A673 (cell line): ENCODE measurements at regions of chr3 and their contacts with region 1.

Region 1: DNA sequence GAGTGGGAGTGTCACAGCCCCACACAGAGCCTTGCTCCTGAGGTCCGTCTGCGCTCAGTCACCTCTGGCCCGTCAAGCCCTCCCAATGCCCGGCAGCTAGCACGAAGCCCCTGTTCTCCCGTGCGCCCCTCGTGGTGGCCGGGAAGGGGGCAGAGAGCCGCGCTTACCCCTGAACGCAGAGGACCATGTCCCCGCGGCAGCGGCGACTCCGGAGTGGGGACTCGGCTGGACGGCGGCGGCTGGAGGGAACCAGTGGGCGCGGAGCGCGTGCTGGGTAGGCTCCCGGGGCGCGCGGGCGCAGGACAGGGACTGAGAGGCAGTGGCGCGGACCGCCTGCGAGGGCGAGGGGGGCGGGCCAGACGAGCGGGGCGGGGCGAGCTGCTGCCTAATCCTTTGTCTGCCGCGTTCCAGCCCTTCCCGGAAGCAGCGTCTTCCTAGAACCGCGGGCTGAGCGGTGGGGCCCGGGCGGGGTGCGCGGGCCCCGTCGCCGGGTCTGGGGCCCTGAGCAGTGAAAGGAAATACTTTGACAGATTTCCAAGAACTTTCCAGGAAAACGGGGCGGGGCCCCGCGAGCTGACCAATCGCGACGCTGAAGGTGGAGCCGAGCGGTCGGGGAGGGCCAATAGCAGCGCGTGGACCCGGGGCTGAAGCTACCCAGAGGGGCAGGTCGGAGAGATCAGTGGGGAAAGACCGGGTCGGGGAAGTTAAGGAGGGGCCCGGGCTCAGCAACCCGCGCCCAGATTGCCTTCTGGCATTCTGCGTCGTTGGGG is at the start of gene CISH:
- DNase-seq: peak; percentile 89
- H3K4me3 ChIP-seq: peak within 1 kb of the TSS; percentile 52
- H3K27ac ChIP-seq: peak within 1 kb of the TSS; percentile 67
- H3K4me1 ChIP-seq: peaks cover 8% of the 10 kb centered on the region
- H3K27me3 ChIP-seq: no peaks in the 10 kb centered on the region
- CTCF ChIP-seq: peak; percentile 44
- total RNA-seq, gene CISH: 0.86 and 1.6 TPM in 2 replicates

Region 2: DNA sequence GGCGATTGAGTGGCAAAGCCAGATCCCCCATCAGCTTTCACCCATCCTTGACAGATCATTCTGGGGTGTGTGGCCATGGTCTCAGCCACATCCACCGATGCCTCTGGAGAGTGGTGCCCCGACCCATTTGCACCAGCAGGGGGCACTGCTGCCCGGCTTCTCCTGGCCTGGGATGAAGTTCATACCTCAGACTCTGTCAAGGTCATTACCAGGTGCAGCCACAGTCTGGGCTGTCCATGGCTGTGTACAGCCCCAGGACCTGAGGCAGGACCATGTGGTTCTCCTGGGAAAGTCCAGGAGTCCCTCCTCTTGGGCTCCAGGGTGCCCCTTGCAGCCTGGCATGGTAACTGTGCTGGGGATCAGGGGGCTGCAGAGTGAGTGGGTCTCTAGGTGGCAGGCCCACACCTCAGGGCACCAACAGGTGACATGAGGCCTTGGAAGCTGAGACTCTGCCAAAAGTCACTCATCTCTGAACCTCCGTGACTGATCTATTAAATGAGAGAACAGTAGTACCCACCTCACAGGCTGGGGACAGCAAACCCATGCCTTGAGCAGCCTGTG is 175.5 kb before region 1 on chr3:
- CTCF ChIA-PET with region 1: no interaction called
- POLR2A ChIA-PET with region 1: no interaction called
- intact Hi-C with region 1: loop called (anchors 5 kb)
- DNase-seq: peak; percentile 23
- H3K4me3 ChIP-seq: no peak overlapping the region
- H3K27ac ChIP-seq: no peak overlapping the region
- H3K4me1 ChIP-seq: no peaks in the 10 kb centered on the region
- H3K27me3 ChIP-seq: no peaks in the 10 kb centered on the region
- CTCF ChIP-seq: peak; percentile 69

Region 3: GRCh38 chr3:50568947-50569749 is 42.5 kb before region 1 on chr3 and contains the start of gene HEMK1:
- CTCF ChIA-PET with region 1: interaction called, 3 read pairs
- POLR2A ChIA-PET with region 1: no interaction called
- intact Hi-C with region 1: loop called (anchors 5 kb)
- DNase-seq: peak; percentile 92
- H3K4me3 ChIP-seq: peak within 1 kb of the TSS; percentile 62
- H3K27ac ChIP-seq: peak within 1 kb of the TSS; percentile 76
- H3K4me1 ChIP-seq: no peaks in the 10 kb centered on the region
- H3K27me3 ChIP-seq: no peaks in the 10 kb centered on the region
- CTCF ChIP-seq: no peak
- total RNA-seq, gene HEMK1: 5.7 and 7.9 TPM in 2 replicates

Region 4: GRCh38 chr3:50850639-50851511 is 239.2 kb after region 1 on chr3:
- CTCF ChIA-PET with region 1: no interaction called
- POLR2A ChIA-PET with region 1: no interaction called
- intact Hi-C with region 1: no loop called
- DNase-seq: no peak
- H3K4me3 ChIP-seq: no peak overlapping the region
- H3K27ac ChIP-seq: no peak overlapping the region
- H3K4me1 ChIP-seq: no peaks in the 10 kb centered on the region
- H3K27me3 ChIP-seq: no peaks in the 10 kb centered on the region
- CTCF ChIP-seq: no peak

Region 5: DNA sequence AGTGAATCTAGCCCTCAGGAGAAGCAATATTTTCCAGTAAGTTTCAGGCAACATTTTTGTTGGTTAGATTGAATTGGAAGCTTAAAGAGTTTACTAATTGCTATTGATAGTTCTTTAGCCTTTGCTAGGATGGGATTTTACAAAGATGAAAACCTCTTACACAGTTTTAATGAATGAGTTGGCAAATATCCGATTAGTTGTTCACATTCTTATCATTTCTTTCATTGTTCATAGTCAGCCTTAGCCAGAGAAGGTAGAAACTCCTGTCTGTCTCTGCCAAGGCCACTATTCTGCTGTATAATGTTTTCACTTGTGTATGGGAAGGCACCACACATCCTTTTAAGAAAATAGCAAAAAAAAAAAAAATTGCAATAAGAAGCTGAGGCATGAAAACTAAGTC is 551.4 kb after region 1 on chr3:
- CTCF ChIA-PET with region 1: no interaction called
- POLR2A ChIA-PET with region 1: no interaction called
- intact Hi-C with region 1: no loop called
- DNase-seq: no peak
- H3K4me3 ChIP-seq: no peak overlapping the region
- H3K27ac ChIP-seq: no peak overlapping the region
- H3K4me1 ChIP-seq: no peaks in the 10 kb centered on the region
- H3K27me3 ChIP-seq: no peaks in the 10 kb centered on the region
- CTCF ChIP-seq: no peak

Region 6: DNA sequence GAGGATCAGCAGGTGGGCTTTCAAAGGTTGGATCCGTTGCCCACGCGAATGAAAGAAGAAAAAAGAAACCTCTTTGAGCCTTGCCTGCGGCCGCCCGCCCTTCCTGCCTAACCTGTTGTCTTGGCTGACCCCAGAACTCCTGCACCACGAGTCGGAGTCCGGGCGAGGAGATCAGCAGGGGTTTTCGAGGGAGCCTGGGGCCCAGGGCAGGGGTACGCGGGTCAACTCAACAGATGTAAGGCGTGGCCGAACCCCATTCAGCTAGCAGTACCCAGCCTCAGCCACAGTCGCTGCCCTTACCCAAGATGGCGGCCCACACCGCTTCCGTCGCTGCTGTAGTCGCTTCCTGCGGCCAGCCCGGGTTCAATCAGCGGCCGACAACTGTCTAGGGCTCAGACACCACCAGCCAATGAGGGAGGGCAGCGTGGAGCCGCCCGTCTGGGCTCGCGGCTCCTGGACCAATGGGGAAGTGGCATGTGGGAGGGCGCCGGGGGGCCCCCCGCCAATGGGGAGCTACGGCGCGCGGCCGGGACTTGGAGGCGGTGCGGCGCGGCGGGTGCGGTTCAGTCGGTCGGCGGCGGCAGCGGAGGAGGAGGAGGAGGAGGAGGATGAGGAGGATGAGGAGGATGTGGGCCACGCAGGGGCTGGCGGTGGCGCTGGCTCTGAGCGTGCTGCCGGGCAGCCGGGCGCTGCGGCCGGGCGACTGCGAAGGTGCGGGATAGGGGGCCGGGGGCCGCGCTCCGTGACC is 773.3 kb after region 1 on chr3 and contains the start of gene MANF:
- CTCF ChIA-PET with region 1: interaction called, 5 read pairs
- POLR2A ChIA-PET with region 1: no interaction called
- intact Hi-C with region 1: loop called (anchors 5 kb)
- DNase-seq: peak; percentile 95
- H3K4me3 ChIP-seq: peak within 1 kb of the TSS; percentile 79
- H3K27ac ChIP-seq: peak within 1 kb of the TSS; percentile 94
- H3K4me1 ChIP-seq: no peaks in the 10 kb centered on the region
- H3K27me3 ChIP-seq: no peaks in the 10 kb centered on the region
- CTCF ChIP-seq: no peak
- total RNA-seq, gene MANF: 82.8 and 106 TPM in 2 replicates